ENCODE measurements at regions of chr1 and their contacts with region 1.

Region 1: DNA sequence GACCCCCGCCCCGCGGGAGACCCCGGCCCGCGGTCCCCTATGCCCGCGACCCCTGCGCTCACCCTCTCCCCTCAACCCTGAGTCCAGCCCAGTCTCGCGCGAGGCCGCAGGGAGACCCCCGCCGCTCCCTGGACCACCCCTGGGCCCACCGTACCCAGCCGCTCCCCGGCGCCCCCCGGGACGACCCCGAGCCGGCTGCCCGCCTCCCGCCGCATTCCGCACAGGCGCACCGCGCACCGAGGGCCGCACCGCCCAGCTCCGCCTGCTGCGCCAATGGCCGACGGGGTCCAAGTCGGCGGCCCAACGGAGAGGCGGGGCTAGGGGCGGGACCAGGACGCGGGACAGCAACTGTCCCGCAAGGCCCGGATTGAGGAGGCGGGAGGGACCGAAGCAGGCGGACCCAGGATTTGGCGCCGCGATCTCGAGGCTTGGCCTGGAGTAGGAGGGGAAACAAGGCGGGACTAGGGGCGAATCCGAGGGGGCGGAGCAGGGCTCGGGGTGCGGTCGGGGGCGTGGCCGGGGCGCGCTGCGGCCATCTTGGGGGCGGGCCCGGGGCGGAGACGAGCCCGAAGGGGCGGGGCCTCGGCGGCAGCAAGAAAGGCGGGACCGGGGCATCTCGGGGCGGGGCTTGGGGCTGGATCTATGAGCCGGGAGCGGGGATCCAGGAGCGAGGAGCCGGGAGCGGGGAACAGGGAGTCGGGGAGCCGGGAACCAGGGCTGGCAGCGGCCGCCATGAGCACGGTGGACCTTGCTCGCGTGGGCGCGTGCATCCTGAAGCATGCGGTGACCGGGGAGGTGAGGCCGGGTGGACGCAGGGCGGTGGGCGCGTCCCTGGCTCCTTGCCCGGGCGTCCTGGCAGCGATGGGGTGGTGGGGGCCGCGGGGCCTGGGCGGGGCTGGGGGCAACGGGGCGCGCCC is at the start of gene PRXL2B:
- DNase-seq: peak; percentile 100
- H3K4me3 Mint-ChIP-seq: peak within 1 kb of the TSS; percentile 81
- H3K27ac Mint-ChIP-seq: peak within 1 kb of the TSS; percentile 95
- H3K4me1 Mint-ChIP-seq: peaks cover 36% of the 10 kb centered on the region
- H3K27me3 Mint-ChIP-seq: no peaks in the 10 kb centered on the region

Region 2: DNA sequence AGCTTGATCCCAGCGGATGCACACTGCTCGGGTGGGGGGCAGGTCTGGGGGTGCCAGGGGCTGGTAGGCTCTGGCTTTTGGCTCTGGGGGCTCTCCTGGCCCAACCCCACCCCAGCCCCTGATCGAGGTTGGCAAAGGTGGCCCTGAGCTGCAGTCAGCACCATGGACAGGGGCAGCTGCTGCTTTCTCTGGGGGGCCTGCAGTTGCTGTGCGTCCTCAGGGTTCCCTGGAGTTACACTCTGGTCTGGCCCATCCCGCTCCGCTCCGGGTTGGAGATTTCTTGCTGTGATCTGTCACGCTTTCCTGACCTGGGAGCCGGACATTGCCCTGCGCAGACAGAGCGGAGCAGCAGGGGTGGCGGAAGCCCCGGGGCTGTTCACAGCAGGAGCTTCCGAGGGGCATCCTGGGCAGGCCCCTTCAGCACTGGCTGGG is 118.4 kb before region 1 on chr1:
- CTCF ChIA-PET with region 1: no interaction called
- DNase-seq: peak; percentile 72
- H3K4me3 Mint-ChIP-seq: no peak overlapping the region
- H3K27ac Mint-ChIP-seq: no peak overlapping the region
- H3K4me1 Mint-ChIP-seq: no peaks in the 10 kb centered on the region
- H3K27me3 Mint-ChIP-seq: peaks cover 45% of the 10 kb centered on the region

Region 3: DNA sequence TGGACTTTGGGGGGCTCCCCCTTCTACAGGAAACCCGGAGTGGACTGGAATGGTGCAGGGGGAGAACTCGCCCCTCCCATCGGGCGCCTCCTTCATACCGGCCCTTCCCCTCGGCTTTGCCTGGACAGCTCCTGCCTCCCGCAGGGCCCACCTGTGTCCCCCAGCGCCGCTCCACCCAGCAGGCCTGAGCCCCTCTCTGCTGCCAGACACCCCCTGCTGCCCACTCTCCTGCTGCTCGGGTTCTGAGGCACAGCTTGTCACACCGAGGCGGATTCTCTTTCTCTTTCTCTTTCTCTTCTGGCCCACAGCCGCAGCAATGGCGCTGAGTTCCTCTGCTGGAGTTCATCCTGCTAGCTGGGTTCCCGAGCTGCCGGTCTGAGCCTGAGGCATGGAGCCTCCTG is 30.1 kb before region 1 on chr1 and contains the start of gene TNFRSF14:
- CTCF ChIA-PET with region 1: interaction called, 40 read pairs
- DNase-seq: peak; percentile 89
- H3K4me3 Mint-ChIP-seq: peak within 1 kb of the TSS; percentile 98
- H3K27ac Mint-ChIP-seq: peak within 1 kb of the TSS; percentile 99
- H3K4me1 Mint-ChIP-seq: peaks cover 49% of the 10 kb centered on the region
- H3K27me3 Mint-ChIP-seq: no peaks in the 10 kb centered on the region

Region 4: DNA sequence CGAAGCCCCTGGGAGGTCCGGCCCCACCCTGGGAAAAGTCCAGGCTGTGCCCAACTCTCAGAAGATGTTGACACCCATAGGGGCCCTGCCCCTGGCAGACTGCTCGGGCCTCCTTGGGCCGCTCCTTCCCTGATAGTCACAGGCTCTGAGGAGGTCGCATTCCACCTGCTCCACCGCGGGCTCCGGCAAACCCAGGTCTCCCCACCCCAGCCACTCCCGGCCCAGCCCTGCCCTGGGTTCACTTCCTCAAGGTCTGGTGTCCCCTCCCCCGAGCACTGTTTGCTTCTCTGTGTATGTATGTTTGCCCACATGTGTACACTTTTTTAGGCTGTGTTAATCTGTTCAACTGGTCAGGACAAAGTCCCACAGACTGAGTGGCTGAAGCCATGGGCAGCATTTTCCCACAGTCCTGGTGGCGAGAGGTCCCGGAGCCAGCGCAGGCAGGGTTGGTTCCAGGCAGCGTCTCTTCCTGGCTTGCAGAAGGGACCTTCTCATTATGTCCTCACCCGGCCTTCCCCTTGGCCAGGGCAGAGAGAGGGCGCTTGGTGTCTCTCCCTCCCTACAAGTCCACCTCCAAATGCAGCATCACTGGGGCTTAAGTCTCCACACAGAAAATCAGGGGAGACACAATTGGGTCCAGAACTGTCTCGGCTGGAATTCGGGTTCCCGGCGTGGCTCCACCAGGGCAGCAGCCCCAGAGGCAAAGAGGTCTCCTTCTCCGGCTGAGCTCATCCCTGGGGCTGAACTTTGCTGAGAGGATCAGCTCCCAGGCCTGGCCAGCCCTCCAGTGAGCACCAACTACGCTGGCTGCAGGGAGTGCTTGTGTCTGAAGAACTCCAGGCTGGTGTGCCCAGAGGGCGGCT is 10.4 kb before region 1 on chr1:
- CTCF ChIA-PET with region 1: no interaction called
- DNase-seq: no peak
- H3K4me3 Mint-ChIP-seq: no peak overlapping the region
- H3K27ac Mint-ChIP-seq: peak overlapping the region; percentile 71
- H3K4me1 Mint-ChIP-seq: peaks cover 59% of the 10 kb centered on the region
- H3K27me3 Mint-ChIP-seq: peaks cover 5% of the 10 kb centered on the region

Region 5: DNA sequence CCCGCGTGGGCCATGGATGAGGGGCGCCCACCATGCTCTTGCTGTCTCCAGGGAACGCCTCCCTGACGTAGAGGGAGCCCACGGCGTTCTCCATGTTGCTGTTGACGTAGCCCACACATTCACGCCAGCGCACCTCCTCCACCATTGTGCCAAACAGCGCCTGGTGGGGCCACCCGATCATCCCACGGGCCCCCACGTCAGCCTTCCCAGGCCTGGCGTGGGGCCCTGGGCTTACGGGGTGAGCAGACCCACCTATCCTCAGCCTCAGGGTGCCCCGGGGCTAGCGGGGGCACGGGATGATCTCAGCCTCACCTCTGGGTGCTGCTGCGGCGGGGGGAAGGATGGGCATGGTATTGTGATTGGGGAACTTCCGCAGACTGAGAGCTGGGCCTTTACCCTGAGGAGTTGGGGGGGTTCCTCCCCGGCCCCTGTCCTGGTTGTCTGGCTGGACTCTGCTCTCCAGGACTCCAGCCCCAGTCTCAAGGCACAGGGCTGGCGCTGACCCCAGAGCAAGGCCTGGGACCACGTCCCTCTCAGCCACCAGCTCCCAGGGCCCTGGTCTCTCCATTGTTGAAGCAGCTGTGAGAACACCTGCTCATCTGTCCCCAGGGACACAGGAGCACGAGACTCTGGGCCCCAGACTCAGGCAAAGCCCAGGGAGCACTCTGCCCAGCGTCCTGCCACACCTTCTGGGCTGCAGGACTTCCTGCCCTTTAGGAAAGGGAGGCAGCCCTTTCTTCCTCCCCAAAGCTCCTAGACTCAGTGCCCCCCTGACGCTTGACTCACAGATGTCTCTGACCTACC is 10.3 kb after region 1 on chr1:
- CTCF ChIA-PET with region 1: no interaction called
- DNase-seq: peak; percentile 13
- H3K4me3 Mint-ChIP-seq: no peak overlapping the region
- H3K27ac Mint-ChIP-seq: no peak overlapping the region
- H3K4me1 Mint-ChIP-seq: peaks cover 7% of the 10 kb centered on the region
- H3K27me3 Mint-ChIP-seq: peaks cover 19% of the 10 kb centered on the region